ENCODE measurements at regions of chr17 and their contacts with region 1.

Region 1: DNA sequence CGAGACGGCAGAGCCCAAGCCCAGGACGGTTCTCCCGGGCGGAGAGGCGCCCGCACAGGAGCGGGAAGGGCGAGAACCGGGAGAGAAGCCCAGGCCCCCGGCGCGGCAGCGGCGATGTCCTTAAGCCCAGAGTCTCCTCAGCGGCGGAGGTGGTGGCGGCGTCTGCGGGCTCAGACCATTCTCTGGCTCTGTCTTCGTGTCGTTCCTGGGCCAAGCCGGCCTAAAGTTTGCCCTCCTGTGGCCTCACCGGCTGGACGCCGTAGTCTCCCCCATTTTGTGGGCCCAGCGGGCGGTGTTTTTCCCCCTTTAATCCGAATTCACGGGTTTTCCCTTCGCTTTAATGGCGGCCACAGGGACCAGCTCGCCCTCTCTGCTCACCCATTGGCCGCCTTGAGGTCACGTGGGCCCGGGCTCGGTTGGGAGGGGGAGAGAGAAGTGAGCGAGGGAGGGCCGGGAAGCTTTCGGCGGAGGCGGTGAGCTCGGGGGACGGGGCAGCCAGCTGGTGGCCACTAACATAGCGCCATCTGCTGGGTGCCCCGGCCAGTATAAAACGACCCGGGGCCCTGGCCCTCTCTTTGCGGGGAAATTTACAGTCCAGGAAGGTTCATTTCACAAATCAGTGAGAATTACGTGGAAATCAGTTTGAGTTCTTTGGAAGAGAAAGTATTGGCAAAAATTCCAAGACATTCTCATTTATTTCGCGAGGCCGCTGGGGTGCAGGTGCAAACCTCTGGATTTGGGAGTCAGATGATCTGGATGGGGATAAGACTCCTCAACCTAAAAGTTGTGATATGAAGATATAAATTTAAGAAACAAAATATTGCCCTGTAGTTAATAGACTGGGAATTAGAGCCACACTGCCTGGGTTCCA is 755 bp upstream of the MED13 start:
- DNase-seq: peak; percentile 98 to 99
- ATAC-seq: peak; percentile 82 to 86
- H3K4me3 ChIP-seq: peak overlapping the region; percentile 84 to 100 (median 91)
- H3K27ac ChIP-seq: peak overlapping the region; percentile 96 to 100 (median 100)
- H3K4me1 ChIP-seq: peaks cover 24 to 26% of the 10 kb centered on the region in 2 donors
- H3K27me3 ChIP-seq: no peaks in the 10 kb centered on the region
- CTCF ChIP-seq: peak; percentile 85 to 95 (median 92)
- POLR2A ChIP-seq: peak; percentile 89 to 94

Region 2: GRCh38 chr17:61862975-61863800 is 202.6 kb before region 1 on chr17 and contains the start of gene BRIP1:
- in situ Hi-C with region 1: loop called in 1 of 4 experiments (anchors 10 kb)
- intact Hi-C with region 1: loop called (anchors 1 kb)
- DNase-seq: peak; percentile 89 to 90
- ATAC-seq: peak; percentile 98 to 99
- H3K4me3 ChIP-seq: peak within 1 kb of the TSS; percentile 69 to 92 (median 75)
- H3K27ac ChIP-seq: peak within 1 kb of the TSS; percentile 79 to 84 (median 81)
- H3K4me1 ChIP-seq: peaks cover 9 to 13% of the 10 kb centered on the region in 2 donors
- H3K27me3 ChIP-seq: no peaks in the 10 kb centered on the region
- CTCF ChIP-seq: no peak
- POLR2A ChIP-seq: no peak
- total RNA-seq, gene BRIP1: 0.09 to 0.13 TPM in 2 of 4 donors, not detected in the others

Region 3: GRCh38 chr17:61927200-61928165 is 138.3 kb before region 1 on chr17 and contains the start of gene INTS2:
- in situ Hi-C with region 1: loop called in 2 of 4 experiments (anchors 5 to 10 kb)
- intact Hi-C with region 1: loop called (anchors 1 kb)
- DNase-seq: peak; percentile 91 to 94
- ATAC-seq: peak; percentile 86 to 89
- H3K4me3 ChIP-seq: peak within 1 kb of the TSS; percentile 72 to 78 (median 74)
- H3K27ac ChIP-seq: peak within 1 kb of the TSS; percentile 80 to 83 (median 82)
- H3K4me1 ChIP-seq: peaks cover 11 to 12% of the 10 kb centered on the region in 2 donors
- H3K27me3 ChIP-seq: no peaks in the 10 kb centered on the region
- CTCF ChIP-seq: no peak
- POLR2A ChIP-seq: peak; percentile 72 to 81
- total RNA-seq, gene INTS2: 3.3 to 12.0 (median 6.1) TPM

Region 4: GRCh38 chr17:61997664-61998063 is 68.2 kb before region 1 on chr17:
- in situ Hi-C with region 1: no loop called
- intact Hi-C with region 1: loop called (anchors 5 kb)
- DNase-seq: no peak
- ATAC-seq: peak; percentile 96 to 98
- H3K4me3 ChIP-seq: peak overlapping the region in 3 of 4 donors; percentile 7 to 18 (median 8)
- H3K27ac ChIP-seq: peak overlapping the region; percentile 63 to 82 (median 70)
- H3K4me1 ChIP-seq: peaks cover 55 to 62% of the 10 kb centered on the region in 2 donors
- H3K27me3 ChIP-seq: no peaks in the 10 kb centered on the region
- CTCF ChIP-seq: no peak
- POLR2A ChIP-seq: no peak

Region 5: DNA sequence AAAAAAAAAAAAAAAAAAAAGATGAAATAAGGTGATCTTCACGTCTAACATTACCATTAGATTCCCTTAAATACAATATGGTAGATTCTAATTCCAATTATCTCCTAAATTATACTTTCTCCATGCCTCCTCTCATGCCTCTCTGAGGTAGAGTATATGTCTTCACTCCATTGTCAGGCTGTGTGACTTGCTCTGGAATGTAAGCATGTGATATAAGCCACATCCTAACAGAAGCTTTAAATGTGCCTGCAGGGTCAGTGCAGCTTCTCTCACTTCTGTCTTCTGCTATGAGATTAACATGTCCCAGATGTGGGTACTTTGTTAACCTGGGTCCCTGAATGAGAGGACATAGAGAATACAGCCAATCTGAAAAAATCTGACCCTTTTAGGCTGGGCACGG is 33.4 kb before region 1 on chr17:
- in situ Hi-C with region 1: no loop called
- intact Hi-C with region 1: loop called (anchors 2 kb)
- DNase-seq: no peak
- ATAC-seq: peak in 1 of 2 donors; percentile 37
- H3K4me3 ChIP-seq: no peak overlapping the region
- H3K27ac ChIP-seq: peak overlapping the region; percentile 70 to 87 (median 80)
- H3K4me1 ChIP-seq: peaks cover 30 to 47% of the 10 kb centered on the region in 2 donors
- H3K27me3 ChIP-seq: no peaks in the 10 kb centered on the region
- CTCF ChIP-seq: no peak
- POLR2A ChIP-seq: no peak

Region 6: DNA sequence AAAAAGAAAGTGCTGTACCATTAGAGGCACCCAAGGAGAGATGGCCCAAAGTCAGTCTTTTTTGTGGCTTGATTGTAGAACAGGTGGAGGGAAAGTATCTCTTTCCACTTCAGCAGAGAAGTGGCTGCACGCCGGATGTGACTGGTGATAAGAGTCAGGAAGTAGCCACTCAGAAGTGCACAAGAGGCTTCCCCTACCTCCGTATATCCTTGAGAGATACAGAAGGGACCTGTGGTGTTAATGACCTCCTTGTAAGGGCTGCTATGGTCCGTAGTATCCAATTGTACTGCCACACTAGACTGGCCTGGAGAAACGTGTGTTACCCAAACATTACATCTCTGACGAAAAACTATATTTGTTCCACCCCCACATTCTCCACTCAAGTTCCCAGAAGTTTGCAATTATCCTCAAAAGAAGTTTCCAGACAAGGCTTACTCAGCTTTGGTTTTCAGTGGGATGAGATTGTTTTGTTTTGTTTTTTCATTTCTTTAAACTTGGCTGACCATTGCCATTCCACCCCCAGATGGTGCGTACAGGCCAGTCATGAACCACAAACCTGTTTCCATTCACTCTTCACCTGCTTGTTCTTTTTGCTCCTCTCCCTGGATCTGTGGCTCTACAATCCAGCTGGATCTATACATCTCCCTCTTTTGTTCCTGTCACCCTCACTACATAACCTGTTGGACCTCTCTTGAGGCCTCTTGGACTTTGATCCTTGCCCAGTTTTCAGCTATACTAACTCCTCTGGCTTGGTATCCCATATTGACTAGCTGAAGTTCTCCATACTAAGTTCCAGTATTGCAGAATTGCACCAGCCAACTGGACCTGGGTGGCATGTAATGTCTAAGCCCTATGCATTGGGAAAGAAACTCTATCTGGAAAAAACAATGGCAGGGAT is 19.9 kb after region 1 on chr17:
- in situ Hi-C with region 1: no loop called
- intact Hi-C with region 1: no loop called
- DNase-seq: no peak
- ATAC-seq: no peak
- H3K4me3 ChIP-seq: no peak overlapping the region
- H3K27ac ChIP-seq: no peak overlapping the region
- H3K4me1 ChIP-seq: no peaks in the 10 kb centered on the region
- H3K27me3 ChIP-seq: no peaks in the 10 kb centered on the region
- CTCF ChIP-seq: no peak
- POLR2A ChIP-seq: no peak

Region 7: DNA sequence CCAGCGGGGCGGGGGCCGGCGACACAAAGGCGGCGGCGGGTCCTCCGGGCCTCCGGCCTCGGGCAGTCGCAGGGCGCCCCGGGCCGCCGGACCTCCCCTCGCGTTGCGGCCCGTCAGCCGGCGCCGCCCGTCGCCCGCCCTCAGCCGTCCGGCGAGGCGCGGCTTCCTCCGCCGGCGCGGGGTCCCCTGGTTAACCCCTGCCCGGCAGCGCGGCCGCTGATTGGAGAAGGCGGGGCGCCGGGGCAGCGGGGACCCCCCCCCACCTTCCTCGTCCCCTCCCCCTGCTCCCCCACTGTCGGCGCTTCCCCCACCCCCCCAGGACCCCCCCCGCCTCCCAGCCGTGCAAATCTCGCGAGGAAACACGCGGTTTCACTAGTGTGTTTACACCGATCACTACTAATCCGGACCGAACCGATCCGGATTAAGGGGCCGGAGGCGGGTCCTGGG is 412.6 kb after region 1 on chr17 and contains the start of gene TLK2:
- in situ Hi-C with region 1: no loop called
- intact Hi-C with region 1: loop called (anchors 5 kb)
- DNase-seq: peak; percentile 55 to 60
- ATAC-seq: peak; percentile 82 to 83
- H3K4me3 ChIP-seq: peak within 1 kb of the TSS; percentile 73 to 87 (median 80)
- H3K27ac ChIP-seq: peak within 1 kb of the TSS; percentile 84 to 96 (median 90)
- H3K4me1 ChIP-seq: peaks cover 19 to 29% of the 10 kb centered on the region in 2 donors
- H3K27me3 ChIP-seq: no peaks in the 10 kb centered on the region
- CTCF ChIP-seq: no peak
- POLR2A ChIP-seq: peak in 1 of 2 donors; percentile 41
- total RNA-seq, gene TLK2: 28.7 to 51.1 (median 47.3) TPM